ENCODE measurements at regions of chr18 and their contacts with region 1.

Region 1: DNA sequence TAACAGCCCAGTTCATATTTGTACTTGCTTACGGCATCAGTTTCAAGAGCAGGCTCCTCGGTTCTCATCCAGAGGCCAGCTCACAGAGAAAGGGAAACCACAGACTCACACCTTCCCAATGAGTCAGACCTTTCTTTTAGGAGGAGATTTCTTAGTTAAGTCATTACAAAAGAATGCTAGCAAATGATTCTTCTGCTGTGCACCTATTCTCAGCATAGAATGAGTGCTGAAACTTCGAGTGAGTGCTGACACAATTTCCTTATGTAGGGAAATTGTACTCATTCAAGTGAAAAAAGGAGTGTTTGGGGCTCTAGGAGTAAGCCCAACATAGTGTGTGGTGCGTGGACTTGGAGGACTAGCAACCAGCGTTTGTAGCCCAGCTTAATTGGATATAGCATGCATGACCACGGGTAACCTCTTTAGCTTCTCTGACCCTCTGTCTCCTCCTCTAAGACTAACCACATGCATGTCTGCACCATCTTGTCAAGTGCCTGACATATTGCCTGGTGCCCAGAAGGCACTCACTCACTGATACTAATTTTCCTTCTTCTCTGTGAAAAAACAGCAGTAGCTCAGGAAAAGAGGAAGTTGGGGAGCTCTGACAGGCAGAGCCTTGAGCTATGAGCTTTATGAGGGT is 87.0 kb downstream of the ALPK2 start:
- DNase-seq: peak; percentile 71
- H3K4me3 Mint-ChIP-seq: peak overlapping the region; percentile 25
- H3K27ac Mint-ChIP-seq: peak overlapping the region; percentile 81
- H3K4me1 Mint-ChIP-seq: peaks cover 82% of the 10 kb centered on the region
- H3K27me3 Mint-ChIP-seq: no peaks in the 10 kb centered on the region
- CTCF ChIP-seq: no peak

Region 2: GRCh38 chr18:58671111-58671631 is 129.3 kb after region 1 on chr18 and contains the start of gene MALT1:
- CTCF ChIA-PET with region 1: interaction called, 7 read pairs
- intact Hi-C with region 1: loop called (anchors 5 kb)
- DNase-seq: peak; percentile 98
- H3K4me3 Mint-ChIP-seq: peak within 1 kb of the TSS; percentile 91
- H3K27ac Mint-ChIP-seq: peak within 1 kb of the TSS; percentile 78
- H3K4me1 Mint-ChIP-seq: peaks cover 66% of the 10 kb centered on the region
- H3K27me3 Mint-ChIP-seq: no peaks in the 10 kb centered on the region
- CTCF ChIP-seq: no peak
- total RNA-seq, gene MALT1: 28.1 and 37.6 TPM in 2 replicates

Measured in Calu3 (cell line).